ENCODE measurements at regions of chr20 and their contacts with region 1.

Region 1: GRCh38 chr20:22861229-22861980 is 173.7 kb upstream of the SSTR4 start:
- DNase-seq: no peak
- ATAC-seq: no peak
- H3K4me3 ChIP-seq: no peak overlapping the region
- H3K27ac ChIP-seq: peak overlapping the region in 11 of 12 donors; percentile 24 to 87 (median 63)
- H3K4me1 ChIP-seq: peaks cover 0 to 20% (median 4%) of the 10 kb centered on the region in 12 donors
- H3K27me3 ChIP-seq: no peaks in the 10 kb centered on the region
- CTCF ChIP-seq: no peak
- POLR2A ChIP-seq: no peak

Region 2: DNA sequence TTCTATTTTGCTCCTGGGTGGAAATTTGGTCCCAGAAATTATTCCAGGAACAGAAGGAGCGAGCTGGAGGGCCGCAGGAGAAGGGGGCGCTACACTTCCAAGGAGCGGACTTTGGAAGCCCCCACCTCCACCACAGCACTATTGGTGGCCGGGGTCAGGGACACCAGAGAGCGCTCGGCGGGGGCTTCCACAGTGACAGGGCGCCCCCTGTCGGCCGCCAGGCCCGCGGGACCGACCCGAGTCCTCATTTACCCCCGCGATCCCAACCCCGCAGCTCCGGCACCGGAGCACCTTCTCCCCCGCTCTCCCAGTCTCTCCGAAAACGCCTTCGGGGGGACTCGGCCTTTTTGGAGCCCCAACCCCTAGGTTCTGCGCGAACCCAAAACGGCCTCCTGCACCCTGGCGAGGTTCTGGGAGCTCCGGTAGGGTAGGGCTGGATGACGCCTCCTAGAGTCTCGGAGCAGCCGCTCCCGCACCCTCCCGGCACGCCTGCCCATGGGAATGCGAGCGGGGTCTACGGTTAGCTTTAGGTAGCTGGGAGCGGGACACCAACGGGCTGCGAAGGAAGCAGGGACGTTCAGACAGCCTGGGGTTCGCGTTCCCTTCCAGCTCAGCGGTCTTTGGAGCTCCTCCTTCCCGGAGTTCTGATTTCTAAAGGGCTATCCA is 274.6 kb before region 1 on chr20:
- intact Hi-C with region 1: no loop called
- DNase-seq: no peak
- ATAC-seq: no peak
- H3K4me3 ChIP-seq: no peak overlapping the region
- H3K27ac ChIP-seq: no peak overlapping the region
- H3K4me1 ChIP-seq: peaks cover 0 to 44% (median 5%) of the 10 kb centered on the region in 12 donors
- H3K27me3 ChIP-seq: peaks cover 58 to 98% (median 79%) of the 10 kb centered on the region in 9 donors
- CTCF ChIP-seq: peak in 9 of 12 donors; percentile 2 to 44 (median 31)
- POLR2A ChIP-seq: no peak

Region 3: DNA sequence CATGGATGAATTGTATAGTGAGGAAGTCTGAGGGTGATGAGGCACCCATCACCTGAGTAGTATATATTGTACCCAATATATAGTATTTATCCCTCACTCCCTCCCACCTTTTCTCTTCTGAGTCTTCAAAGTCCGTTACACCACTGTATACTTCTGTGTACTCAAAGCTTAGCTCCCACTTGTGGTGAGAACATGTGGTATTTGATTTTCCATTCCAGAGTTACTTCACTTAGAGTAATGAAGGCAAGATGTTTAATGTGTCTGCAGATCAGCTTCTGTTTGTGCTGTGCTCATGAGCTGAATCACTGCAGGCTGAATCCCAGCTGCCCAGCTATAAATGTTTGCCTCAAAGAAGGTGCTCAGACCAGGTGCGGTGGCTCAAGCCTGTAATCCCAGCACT is 137.8 kb before region 1 on chr20:
- intact Hi-C with region 1: loop called in 3 of 10 experiments (anchors 5 to 10 kb)
- DNase-seq: no peak
- ATAC-seq: no peak
- H3K4me3 ChIP-seq: no peak overlapping the region
- H3K27ac ChIP-seq: peak overlapping the region in 1 of 12 donors; percentile 53
- H3K4me1 ChIP-seq: peaks cover 0 to 25% (median 7%) of the 10 kb centered on the region in 12 donors
- H3K27me3 ChIP-seq: no peaks in the 10 kb centered on the region
- CTCF ChIP-seq: no peak
- POLR2A ChIP-seq: no peak

Region 4: DNA sequence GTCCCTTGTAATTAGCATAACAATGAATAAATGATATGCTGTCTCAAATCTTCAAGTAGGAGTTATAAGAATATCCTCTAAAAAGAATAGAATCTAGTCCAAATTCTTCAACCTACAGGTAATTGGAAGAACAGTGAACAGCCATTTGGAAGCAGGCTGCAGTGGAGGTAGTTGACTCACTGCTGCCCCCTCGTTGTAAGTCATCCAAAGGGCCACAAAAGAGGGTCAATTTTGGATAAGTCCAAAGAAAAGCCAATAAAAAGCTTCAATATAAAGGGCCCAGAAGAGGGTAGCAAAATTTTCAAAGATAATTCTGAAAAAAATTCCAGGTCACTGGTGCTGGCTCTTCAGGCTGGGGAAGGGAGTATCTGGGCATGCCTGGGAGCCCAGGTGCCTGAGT is 112.9 kb after region 1 on chr20:
- intact Hi-C with region 1: loop called in 5 of 10 experiments (anchors 1 to 10 kb)
- DNase-seq: no peak
- ATAC-seq: no peak
- H3K4me3 ChIP-seq: no peak overlapping the region
- H3K27ac ChIP-seq: no peak overlapping the region
- H3K4me1 ChIP-seq: peaks cover 0 to 20% (median 13%) of the 10 kb centered on the region in 12 donors
- H3K27me3 ChIP-seq: peaks cover 0 to 3% (median 0%) of the 10 kb centered on the region in 9 donors
- CTCF ChIP-seq: peak in 5 of 12 donors; percentile 7 to 27 (median 14)
- POLR2A ChIP-seq: no peak

Region 5: DNA sequence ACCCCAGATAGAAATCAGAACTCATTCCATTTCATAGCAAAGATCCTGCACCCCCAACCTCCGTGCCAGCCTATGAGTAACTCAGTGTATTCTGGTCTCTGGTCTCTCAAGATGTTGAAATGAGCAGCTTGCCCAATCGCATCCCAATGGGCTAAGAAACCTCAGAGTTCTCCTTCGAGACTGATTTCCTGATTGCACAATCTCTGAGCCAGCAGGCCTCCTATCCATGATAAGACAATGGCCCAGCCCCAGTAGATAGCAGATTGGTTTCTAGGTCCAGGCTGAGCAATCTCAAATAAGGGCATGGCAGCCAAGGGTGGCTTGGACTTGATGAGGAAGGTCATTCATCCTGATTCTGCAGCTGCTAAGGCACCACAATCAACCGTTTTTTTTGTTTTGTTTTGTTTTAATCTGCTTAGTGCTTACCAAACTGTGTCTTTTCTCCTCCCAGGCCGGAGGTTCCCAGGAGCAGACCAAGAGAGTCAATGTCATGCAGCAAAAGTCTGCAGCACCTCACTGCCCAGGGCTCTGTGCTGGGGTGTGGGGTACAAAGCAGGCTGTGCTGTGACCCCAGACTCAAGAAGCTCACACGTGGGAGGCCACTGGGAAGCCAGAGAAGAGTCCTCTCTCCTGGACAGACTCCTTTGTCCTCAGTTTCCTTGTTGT is 364.1 kb after region 1 on chr20:
- intact Hi-C with region 1: loop called in 2 of 10 experiments (anchors 10 kb)
- DNase-seq: peak in 2 of 5 donors; percentile 69 to 75
- ATAC-seq: peak in 3 of 4 donors; percentile 56 to 86 (median 84)
- H3K4me3 ChIP-seq: no peak overlapping the region
- H3K27ac ChIP-seq: peak overlapping the region in 1 of 12 donors; percentile 5
- H3K4me1 ChIP-seq: peaks cover 0 to 34% (median 0%) of the 10 kb centered on the region in 12 donors
- H3K27me3 ChIP-seq: no peaks in the 10 kb centered on the region
- CTCF ChIP-seq: no peak
- POLR2A ChIP-seq: no peak

Region 6: DNA sequence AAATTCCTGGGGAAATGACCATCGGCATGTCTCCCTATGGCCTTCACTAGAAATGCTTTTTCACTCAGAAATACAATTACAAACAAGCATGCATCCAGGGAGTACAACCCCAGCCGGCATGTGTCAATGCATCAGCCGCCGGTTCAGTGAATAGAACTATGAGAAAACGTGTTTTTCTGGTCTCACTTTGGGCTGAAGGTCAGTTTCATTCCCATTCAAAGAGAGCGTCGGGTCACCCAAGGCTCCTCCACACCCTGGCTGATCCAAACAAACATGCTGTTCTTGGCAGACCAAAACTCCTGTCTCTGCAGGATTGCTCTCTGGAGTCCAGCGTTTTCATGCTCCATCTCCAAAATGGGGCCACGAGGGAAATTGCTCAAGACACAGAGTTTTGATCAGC is 453.7 kb after region 1 on chr20:
- intact Hi-C with region 1: loop called in 1 of 10 experiments (anchors 10 kb)
- DNase-seq: no peak
- ATAC-seq: peak; percentile 52 to 72 (median 61)
- H3K4me3 ChIP-seq: no peak overlapping the region
- H3K27ac ChIP-seq: peak overlapping the region in 6 of 12 donors; percentile 12 to 61 (median 36)
- H3K4me1 ChIP-seq: peaks cover 0 to 22% (median 6%) of the 10 kb centered on the region in 12 donors
- H3K27me3 ChIP-seq: no peaks in the 10 kb centered on the region
- CTCF ChIP-seq: no peak
- POLR2A ChIP-seq: no peak